K562 (cell line): ENCODE measurements at regions of chr6 and their contacts with region 1.

Region 1: DNA sequence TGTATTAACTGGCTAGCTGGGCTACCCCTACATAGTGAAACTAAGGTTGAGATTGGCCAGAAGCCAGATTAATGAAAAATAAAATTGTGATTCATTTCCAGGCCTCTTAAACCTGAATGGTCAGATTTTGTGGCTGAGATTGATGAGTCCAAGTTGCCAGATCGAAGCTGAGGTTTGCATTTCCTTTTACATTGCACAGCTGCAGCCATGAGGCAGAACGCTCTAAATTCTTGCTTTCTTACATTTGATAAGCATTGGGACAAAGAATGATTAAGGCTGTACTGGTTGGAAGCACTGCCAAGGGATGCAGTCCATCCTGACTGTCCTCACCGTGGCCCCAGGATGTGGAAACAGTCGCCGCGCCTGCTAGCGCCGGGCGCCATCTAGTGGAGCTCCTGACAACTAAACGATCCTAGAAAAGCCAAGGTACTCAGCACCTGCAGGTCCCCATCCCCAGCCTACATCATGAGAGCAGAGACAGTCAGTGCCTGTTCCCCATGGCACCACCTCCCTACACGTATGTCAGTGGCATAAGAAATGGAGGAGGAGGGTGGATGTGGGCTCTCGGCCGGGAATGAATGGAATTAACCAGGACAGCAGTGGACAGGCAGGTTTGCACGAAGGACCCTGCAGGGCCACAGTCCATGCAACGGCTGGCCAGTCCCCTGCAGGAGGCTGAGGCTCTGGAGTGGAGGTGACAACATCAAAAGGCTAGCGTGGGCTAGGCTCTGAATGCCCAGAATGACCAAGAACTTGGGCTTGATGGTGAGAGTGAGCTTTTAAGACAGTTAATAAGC is 19.0 kb downstream of the PXDC1 start:
- DNase-seq: peak; percentile 77 to 87 (median 84)
- ATAC-seq: peak; percentile 96
- H3K4me3 ChIP-seq: no peak overlapping the region
- H3K27ac ChIP-seq: no peak overlapping the region
- H3K4me1 ChIP-seq: peaks cover 0 to 3% of the 10 kb centered on the region in 2 experiments; a peak in 1 of 5 replicates
- H3K27me3 ChIP-seq: peaks cover 49 to 81% of the 10 kb centered on the region in 2 experiments
- CTCF ChIP-seq: peak; percentile 94 to 96 (median 95)
- EP300 ChIP-seq: no peak
- POLR2A ChIP-seq: no peak
- RAD21 ChIP-seq: peak; percentile 98 to 99

Region 2: GRCh38 chr6:2999618-3000557 is 732.7 kb before region 1 on chr6 and contains the start of gene NQO2:
- CTCF ChIA-PET with region 1: no interaction called
- POLR2A ChIA-PET with region 1: no interaction called
- in situ Hi-C with region 1: loop called (anchors 5 kb)
- intact Hi-C with region 1: loop called (anchors 5 kb)
- DNase-seq: peak; percentile 95 to 100 (median 100)
- ATAC-seq: peak; percentile 87
- H3K4me3 ChIP-seq: peak within 1 kb of the TSS; percentile 86
- H3K27ac ChIP-seq: peak within 1 kb of the TSS; percentile 79
- H3K4me1 ChIP-seq: peaks cover 23 to 27% of the 10 kb centered on the region in 2 experiments; a peak in 4 of 5 replicates
- H3K27me3 ChIP-seq: no peaks in the 10 kb centered on the region
- CTCF ChIP-seq: no peak
- EP300 ChIP-seq: no peak
- POLR2A ChIP-seq: peak; percentile 92
- RAD21 ChIP-seq: peak in 1 of 2 experiments; percentile 29; a peak in 2 of 4 replicates
- polyA plus RNA-seq, gene NQO2: 54.6 to 70.1 TPM

Region 3: DNA sequence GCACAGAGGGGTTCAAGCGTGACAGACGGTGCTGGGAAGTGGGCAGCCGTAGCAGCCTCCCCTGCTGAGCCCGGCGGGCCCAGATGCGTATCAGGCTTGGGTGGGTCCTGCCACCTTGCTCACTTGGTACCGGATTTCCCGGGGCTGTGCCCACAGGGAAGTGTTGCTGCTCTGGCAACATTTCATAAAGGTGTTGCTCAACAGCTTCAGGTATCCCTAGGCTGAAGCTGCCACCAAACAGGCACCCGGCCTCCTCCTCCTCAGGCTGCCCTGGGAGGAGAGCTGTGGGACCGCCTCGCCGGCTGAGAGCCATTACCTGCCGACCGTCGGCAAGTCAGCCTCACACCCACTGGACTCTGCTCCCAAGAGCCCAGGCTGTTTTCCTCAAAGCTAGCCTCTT is 462.3 kb before region 1 on chr6:
- CTCF ChIA-PET with region 1: no interaction called
- POLR2A ChIA-PET with region 1: interaction called, 3 read pairs
- in situ Hi-C with region 1: loop called (anchors 5 kb)
- intact Hi-C with region 1: no loop called
- DNase-seq: no peak
- ATAC-seq: no peak
- H3K4me3 ChIP-seq: no peak overlapping the region
- H3K27ac ChIP-seq: no peak overlapping the region
- H3K4me1 ChIP-seq: peaks cover 0 to 7% of the 10 kb centered on the region in 2 experiments; a peak in 2 of 5 replicates
- H3K27me3 ChIP-seq: no peaks in the 10 kb centered on the region
- CTCF ChIP-seq: no peak
- EP300 ChIP-seq: no peak
- POLR2A ChIP-seq: no peak
- RAD21 ChIP-seq: no peak

Region 4: DNA sequence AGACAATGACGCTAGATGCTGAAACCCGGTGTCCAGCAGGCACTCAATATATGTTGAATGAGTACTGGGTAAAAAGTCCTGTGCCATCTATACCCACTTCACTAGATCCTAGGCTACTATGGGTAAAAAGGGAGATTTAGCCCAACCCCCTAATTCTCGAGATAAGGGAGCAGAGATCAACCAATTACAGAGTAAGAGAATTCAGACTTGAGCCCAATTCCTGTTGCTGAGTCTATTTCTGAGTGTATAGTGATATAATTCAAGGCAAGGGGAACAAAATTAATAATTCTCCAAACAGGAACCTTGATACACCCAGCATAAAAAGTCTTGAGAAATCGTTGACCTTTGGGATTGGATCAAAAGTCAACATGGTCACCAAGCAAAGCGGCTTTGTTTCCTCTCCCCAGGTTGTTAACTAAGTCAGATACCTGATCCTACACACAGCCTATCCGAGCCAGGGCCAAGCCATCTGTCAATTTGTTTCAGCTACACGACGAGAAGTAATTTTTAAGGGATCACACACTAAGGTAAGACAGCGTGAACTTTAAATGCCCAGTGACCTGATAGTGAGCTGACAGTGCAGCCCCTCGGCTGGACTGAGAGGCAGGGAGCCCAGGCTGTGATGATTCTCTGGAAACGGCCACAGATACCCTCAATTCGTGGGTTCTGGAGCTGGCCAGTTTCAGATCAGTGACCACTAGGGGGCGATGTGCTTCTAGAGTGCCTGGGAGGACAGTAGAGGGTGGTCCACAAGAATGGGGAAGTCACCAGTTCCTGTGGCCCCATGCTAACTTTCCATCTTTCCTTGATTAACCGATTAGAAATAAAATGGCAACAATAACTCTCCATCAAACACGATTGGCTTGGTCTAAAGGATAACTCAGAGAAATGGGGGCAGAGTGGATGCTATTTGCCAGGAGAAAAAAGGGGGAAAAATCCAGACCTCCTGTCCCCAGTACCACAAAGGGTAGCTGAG is 321.9 kb before region 1 on chr6:
- CTCF ChIA-PET with region 1: interaction called, 4 read pairs
- POLR2A ChIA-PET with region 1: no interaction called
- in situ Hi-C with region 1: no loop called
- intact Hi-C with region 1: loop called (anchors 5 kb)
- DNase-seq: peak; percentile 78 to 91 (median 84)
- ATAC-seq: peak; percentile 85
- H3K4me3 ChIP-seq: no peak overlapping the region
- H3K27ac ChIP-seq: no peak overlapping the region
- H3K4me1 ChIP-seq: peaks cover 40 to 60% of the 10 kb centered on the region in 2 experiments
- H3K27me3 ChIP-seq: no peaks in the 10 kb centered on the region
- CTCF ChIP-seq: peak; percentile 88 to 97 (median 88)
- EP300 ChIP-seq: no peak; the same call in 1 of the 2 replicates
- POLR2A ChIP-seq: no peak
- RAD21 ChIP-seq: peak; percentile 72 to 88

Region 5: GRCh38 chr6:3526962-3527650 is 205.4 kb before region 1 on chr6:
- CTCF ChIA-PET with region 1: no interaction called
- POLR2A ChIA-PET with region 1: no interaction called
- in situ Hi-C with region 1: no loop called
- intact Hi-C with region 1: loop called (anchors 5 kb)
- DNase-seq: no peak
- ATAC-seq: no peak
- H3K4me3 ChIP-seq: no peak overlapping the region
- H3K27ac ChIP-seq: no peak overlapping the region
- H3K4me1 ChIP-seq: no peaks in the 10 kb centered on the region
- H3K27me3 ChIP-seq: peaks cover 58 to 81% of the 10 kb centered on the region in 2 experiments
- CTCF ChIP-seq: no peak
- EP300 ChIP-seq: no peak
- POLR2A ChIP-seq: no peak
- RAD21 ChIP-seq: no peak

Region 6: GRCh38 chr6:3913077-3913957 is 180.8 kb after region 1 on chr6:
- CTCF ChIA-PET with region 1: no interaction called
- POLR2A ChIA-PET with region 1: no interaction called
- in situ Hi-C with region 1: no loop called
- intact Hi-C with region 1: no loop called
- DNase-seq: peak; percentile 72 to 87 (median 78)
- ATAC-seq: peak; percentile 86
- H3K4me3 ChIP-seq: no peak overlapping the region
- H3K27ac ChIP-seq: peak overlapping the region; percentile 58; the same call in 2 of the 3 replicates
- H3K4me1 ChIP-seq: peaks cover 11 to 29% of the 10 kb centered on the region in 2 experiments
- H3K27me3 ChIP-seq: peaks cover 0 to 11% of the 10 kb centered on the region in 2 experiments; a peak in 2 of 5 replicates
- CTCF ChIP-seq: no peak
- EP300 ChIP-seq: peak; percentile 86
- POLR2A ChIP-seq: no peak
- RAD21 ChIP-seq: no peak